Head of caudate nucleus (tissue), 42 donors: ENCODE measurements at regions of chr10 and their contacts with region 1.

Region 1: DNA sequence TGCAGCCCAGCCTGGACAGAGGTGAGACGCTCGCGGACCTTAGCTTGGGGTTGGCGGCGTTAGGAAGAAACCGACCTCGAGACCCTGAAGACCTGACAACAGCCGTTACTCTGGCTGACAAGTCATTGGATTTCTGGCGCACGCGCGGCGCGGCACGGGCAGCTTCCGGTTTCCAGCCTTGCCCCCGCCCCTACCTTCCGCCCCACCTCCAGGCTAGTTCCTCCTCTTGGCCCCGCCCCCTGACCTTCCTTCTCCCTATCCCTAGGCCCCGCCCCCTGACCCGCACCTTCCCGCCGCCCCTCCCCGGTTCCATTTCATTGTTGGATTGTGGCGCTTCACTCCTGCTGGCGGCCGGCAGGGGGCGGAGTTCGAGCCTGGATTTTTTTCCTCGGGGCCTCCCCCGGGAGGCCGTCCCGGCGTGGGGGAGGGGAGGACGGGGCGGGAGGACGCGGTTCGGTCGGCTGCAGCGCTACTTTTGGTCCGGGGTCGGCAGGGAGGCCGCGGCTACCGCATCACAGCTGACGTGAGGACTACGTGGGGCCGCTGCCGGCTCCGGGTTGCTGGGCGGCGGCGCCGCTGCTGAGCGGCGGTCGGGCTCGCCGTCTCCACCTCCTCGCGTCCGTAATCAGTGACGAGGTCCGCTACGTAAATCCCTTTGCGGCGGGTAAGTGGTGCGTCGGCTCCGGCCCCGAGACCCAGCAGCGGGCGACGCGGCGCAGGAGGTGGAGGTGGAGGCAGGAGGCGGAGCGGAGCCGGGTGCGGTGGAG is at the start of gene CREM:
- DNase-seq: peak; percentile 94 to 100 (median 97)

Region 2: DNA sequence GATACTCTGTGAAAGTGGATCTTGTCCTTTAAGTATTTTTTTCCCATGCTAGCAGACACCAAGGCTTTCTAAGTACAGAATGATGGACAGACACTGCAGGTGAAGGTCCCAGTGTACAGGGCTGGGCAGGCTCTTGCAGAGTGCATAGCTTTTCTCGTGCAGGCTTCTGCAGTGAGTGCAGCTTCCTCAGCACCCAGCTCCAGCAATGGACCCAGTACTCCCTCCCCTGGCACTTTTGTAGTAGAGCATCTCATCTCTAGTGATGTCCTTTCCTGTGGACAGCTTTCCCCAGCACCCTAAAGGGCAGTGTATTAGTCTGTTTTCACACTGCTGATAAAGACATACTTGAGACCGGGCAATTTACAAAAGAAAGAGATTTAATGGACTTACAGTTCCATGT is 140.9 kb before region 1 on chr10:
- intact Hi-C with region 1: no loop called
- DNase-seq: peak in 1 of 42 donors; percentile 1

Region 3: GRCh38 chr10:35058134-35058533 is 68.6 kb before region 1 on chr10:
- intact Hi-C with region 1: no loop called
- DNase-seq: no peak

Region 4: DNA sequence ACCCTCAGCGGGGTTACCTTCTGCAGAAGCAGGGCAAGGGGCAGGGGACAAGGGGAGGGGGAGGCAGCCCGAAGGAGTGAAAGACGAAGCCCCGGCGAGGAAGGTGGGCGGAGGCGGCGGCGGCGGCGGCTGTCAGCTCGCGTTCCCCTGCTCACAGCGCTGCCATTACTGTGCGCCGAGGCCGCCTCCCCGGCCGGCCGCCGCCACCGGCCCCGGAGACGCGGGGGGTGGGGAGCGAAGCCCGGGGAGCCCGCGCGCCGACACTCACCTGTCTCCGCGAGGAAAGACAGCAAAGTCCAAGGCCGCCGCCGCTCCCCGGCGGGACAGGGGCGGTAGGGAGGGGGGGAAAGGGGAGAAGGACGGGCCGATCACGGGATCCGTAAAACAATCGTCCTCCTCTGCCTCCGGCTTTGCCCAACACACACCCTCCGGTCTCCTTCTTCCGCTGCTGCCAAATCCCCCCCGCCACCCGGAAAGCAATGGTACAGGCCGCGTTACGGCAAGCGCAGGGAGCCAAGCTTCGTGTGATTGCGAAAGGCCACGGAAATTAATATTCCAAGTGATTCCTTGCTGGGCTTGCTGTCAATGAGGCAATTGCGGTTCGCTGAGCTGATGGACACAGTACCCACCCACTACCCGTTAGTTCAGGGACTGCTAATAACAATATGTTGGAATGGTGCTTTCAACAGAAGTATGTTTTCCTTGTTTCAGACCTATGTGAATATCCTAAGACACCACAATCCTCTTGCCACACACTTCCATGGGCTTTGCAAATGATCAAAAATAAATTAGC is 36.4 kb before region 1 on chr10 and contains the start of gene CUL2:
- intact Hi-C with region 1: loop called (anchors 2 kb)
- DNase-seq: peak; percentile 82 to 98 (median 94)

Region 5: GRCh38 chr10:35195361-35196306 is 68.9 kb after region 1 on chr10:
- intact Hi-C with region 1: loop called (anchors 5 kb)
- DNase-seq: peak in 22 of 42 donors; percentile 28 to 78 (median 56)

Region 6: GRCh38 chr10:35208536-35208935 is 81.8 kb after region 1 on chr10:
- intact Hi-C with region 1: no loop called
- DNase-seq: peak in 7 of 42 donors; percentile 36 to 60 (median 51)

Region 7: DNA sequence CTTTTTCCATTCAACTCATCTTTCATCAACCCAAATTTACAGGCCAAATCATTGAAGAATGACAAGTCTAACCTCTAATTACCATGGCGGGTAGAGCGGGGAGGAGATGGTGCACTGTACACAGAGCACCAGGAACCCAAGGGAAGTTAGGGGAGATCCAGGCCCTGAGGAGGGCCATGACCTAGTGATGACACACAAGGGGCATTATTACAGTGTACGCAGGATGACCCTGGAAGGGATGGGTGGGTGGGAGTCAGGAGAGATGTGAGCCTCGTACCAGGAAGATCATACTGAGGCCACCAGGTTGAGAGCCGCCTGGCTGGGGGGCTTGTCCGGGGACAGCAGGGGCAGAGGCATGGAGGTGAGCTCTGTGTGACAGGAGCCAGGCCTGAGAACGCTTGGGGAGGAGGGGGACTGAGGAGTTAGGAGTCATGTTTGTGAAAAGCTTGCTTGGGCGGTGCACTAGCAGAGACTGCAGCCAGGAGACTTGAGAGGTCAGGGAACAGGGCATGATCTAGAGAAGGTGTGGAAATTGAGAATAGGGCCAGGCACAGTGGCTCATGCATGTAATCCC is 120.1 kb after region 1 on chr10:
- intact Hi-C with region 1: no loop called
- DNase-seq: no peak